GM12878 (cell line): ENCODE measurements at regions of chr14 and their contacts with region 1.

Region 1: GRCh38 chr14:102316743-102317563 is 2.6 kb upstream of the ZNF839 start:
- DNase-seq: peak; percentile 61
- ATAC-seq: peak; percentile 83
- H3K4me3 ChIP-seq: peak overlapping the region; percentile 75
- H3K27ac ChIP-seq: peak overlapping the region; percentile 61; the same call in 1 of the 2 replicates
- H3K4me1 ChIP-seq: peaks cover 27% of the 10 kb centered on the region
- H3K27me3 ChIP-seq: no peaks in the 10 kb centered on the region
- CTCF ChIP-seq: peak; percentile 84 to 93 (median 89)
- EP300 ChIP-seq: peak in 1 of 2 experiments; percentile 45; a peak in 1 of 4 replicates
- POLR2A ChIP-seq: no peak
- RAD21 ChIP-seq: no peak

Region 2: DNA sequence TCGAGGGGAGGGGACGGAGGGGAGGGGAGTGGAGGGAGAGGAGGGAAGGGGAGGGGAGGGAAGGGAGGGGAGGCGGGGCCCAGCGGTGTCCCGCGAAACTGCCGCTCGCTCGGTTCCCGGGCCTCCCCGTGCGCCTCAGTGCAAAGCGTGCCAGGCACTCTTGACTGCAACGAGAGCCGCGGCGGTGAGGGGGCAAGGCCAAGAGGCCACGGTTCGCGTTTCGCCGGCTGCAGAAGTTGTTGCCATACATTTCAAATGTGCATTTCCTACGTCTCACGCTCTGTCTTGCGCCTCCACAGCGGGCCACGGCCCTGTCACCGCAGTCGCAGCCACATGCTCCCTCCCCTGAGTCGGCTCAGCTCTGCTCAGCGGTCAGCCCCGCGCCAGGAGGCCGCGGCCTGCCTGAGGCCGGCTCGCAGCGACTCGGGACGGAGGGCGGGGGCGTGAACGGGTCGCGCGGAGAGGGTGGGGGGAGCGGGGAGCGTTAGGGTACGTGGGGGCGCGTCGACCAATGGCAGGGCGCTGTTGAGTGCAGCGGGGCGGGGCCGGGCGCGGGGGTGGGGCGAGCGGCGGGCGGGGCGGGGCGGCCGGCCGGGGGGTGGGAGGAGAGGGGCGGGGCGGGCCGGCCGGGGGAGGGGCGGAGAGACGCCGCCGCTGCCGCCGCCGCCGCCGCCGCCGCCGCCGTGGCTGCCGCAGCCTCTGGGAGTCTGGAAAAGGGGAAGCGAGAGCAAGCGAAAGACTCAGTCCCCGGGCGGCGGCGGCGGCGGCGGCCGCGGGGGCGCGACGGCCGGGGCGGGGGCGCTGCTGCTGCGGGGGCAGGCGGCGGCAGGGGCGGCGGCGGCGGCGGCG is 555.7 kb before region 1 on chr14 and contains the start of gene PPP2R5C:
- CTCF ChIA-PET with region 1: no interaction called
- POLR2A ChIA-PET with region 1: interaction called, 3 read pairs
- RAD21 ChIA-PET with region 1: no interaction called
- SMC1A ChIA-PET with region 1: no interaction called
- in situ Hi-C with region 1: loop called (anchors 25 kb)
- intact Hi-C with region 1: no loop called
- DNase-seq: no peak
- ATAC-seq: peak; percentile 93
- H3K4me3 ChIP-seq: peak within 1 kb of the TSS; percentile 84
- H3K27ac ChIP-seq: 0 out of 2 replicates have a peak within 1 kb of the TSS, but pooled peaks have one; percentile 37
- H3K4me1 ChIP-seq: no peaks in the 10 kb centered on the region
- H3K27me3 ChIP-seq: no peaks in the 10 kb centered on the region; a peak in 2 of 4 replicates
- CTCF ChIP-seq: no peak
- EP300 ChIP-seq: no peak
- POLR2A ChIP-seq: peak; percentile 67; the same call in 1 of the 2 replicates
- RAD21 ChIP-seq: no peak
- polyA plus RNA-seq, gene PPP2R5C: 190 to 199 TPM

Region 3: GRCh38 chr14:101964297-101965144 is 352.4 kb before region 1 on chr14 and contains the start of gene DYNC1H1:
- CTCF ChIA-PET with region 1: interaction called, 17 read pairs
- POLR2A ChIA-PET with region 1: no interaction called
- RAD21 ChIA-PET with region 1: interaction called, 5 read pairs
- SMC1A ChIA-PET with region 1: interaction called, 7 read pairs
- in situ Hi-C with region 1: loop called (anchors 5 kb)
- intact Hi-C with region 1: loop called (anchors 2 kb)
- DNase-seq: peak; percentile 27
- ATAC-seq: peak; percentile 87
- H3K4me3 ChIP-seq: peak within 1 kb of the TSS; percentile 79
- H3K27ac ChIP-seq: peak within 1 kb of the TSS; percentile 78
- H3K4me1 ChIP-seq: peaks cover 4% of the 10 kb centered on the region
- H3K27me3 ChIP-seq: no peaks in the 10 kb centered on the region
- CTCF ChIP-seq: no peak
- EP300 ChIP-seq: no peak
- POLR2A ChIP-seq: peak; percentile 97
- RAD21 ChIP-seq: no peak
- polyA plus RNA-seq, gene DYNC1H1: 38.4 to 54.0 TPM

Region 4: GRCh38 chr14:102096214-102097114 is 220.5 kb before region 1 on chr14:
- CTCF ChIA-PET with region 1: interaction called, 11 read pairs
- POLR2A ChIA-PET with region 1: interaction called, 3 read pairs
- RAD21 ChIA-PET with region 1: interaction called, 21 read pairs
- SMC1A ChIA-PET with region 1: interaction called, 13 read pairs
- in situ Hi-C with region 1: no loop called
- intact Hi-C with region 1: loop called (anchors 5 kb)
- DNase-seq: no peak
- ATAC-seq: peak; percentile 88
- H3K4me3 ChIP-seq: no peak overlapping the region
- H3K27ac ChIP-seq: no peak overlapping the region
- H3K4me1 ChIP-seq: no peaks in the 10 kb centered on the region; the same call in 1 of the 2 replicates
- H3K27me3 ChIP-seq: no peaks in the 10 kb centered on the region
- CTCF ChIP-seq: peak; percentile 78 to 92 (median 88)
- EP300 ChIP-seq: no peak
- POLR2A ChIP-seq: no peak
- RAD21 ChIP-seq: peak; percentile 90

Region 5: DNA sequence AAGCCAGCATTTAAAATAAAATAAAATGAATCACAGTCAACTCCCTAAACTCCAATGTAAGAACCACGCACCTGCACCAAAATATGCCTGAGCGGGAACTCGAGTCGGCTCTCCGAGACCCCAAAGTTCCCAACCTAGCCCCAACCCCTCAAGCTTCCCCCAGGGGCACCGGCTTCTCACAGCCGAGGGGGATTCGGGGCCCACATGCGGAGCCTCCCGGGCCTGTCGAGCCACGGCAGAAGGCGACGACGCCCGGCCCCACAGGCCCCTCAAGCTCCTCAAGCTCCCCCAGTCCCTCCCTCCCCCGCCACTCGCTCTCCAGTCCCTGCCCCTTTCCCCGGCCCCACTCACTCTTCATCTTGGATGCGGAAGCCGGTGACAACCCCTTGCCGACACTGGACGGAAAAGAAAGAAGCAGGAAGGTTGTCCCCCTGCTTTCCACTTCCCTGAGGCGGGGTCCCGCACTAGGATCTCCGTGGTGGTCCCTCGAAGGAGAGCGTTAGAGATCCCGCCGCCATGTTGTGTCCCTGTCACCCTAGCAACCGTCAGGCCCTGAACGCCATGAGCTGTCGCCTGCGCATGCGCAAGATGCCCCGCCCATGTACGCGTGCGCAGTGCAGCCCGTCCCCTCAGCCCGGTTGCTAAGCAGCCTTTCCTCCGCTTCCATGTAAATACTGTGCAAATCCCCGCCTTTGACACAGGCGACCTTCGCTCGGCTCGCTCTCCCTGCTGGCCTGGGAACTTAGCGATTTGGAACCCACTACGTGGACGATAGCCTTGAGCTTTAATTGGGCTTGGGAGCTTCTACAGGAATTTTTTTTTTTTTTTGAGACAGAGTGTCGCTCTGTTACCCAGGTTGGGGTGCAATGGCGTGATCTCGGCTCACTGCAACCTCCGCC is 12.1 kb before region 1 on chr14 and contains the start of gene MOK:
- CTCF ChIA-PET with region 1: interaction called, 19 read pairs
- POLR2A ChIA-PET with region 1: interaction called, 4 read pairs
- RAD21 ChIA-PET with region 1: interaction called, 8 read pairs
- SMC1A ChIA-PET with region 1: interaction called, 15 read pairs
- in situ Hi-C with region 1: no loop called
- intact Hi-C with region 1: no loop called
- DNase-seq: peak; percentile 92
- ATAC-seq: peak; percentile 99
- H3K4me3 ChIP-seq: peak within 1 kb of the TSS; percentile 78
- H3K27ac ChIP-seq: no peak within 1 kb of the TSS
- H3K4me1 ChIP-seq: no peaks in the 10 kb centered on the region; the same call in 1 of the 2 replicates
- H3K27me3 ChIP-seq: no peaks in the 10 kb centered on the region
- CTCF ChIP-seq: no peak
- EP300 ChIP-seq: no peak
- POLR2A ChIP-seq: no peak
- RAD21 ChIP-seq: no peak
- polyA plus RNA-seq, gene MOK: 0.10 to 0.46 TPM

Region 6: DNA sequence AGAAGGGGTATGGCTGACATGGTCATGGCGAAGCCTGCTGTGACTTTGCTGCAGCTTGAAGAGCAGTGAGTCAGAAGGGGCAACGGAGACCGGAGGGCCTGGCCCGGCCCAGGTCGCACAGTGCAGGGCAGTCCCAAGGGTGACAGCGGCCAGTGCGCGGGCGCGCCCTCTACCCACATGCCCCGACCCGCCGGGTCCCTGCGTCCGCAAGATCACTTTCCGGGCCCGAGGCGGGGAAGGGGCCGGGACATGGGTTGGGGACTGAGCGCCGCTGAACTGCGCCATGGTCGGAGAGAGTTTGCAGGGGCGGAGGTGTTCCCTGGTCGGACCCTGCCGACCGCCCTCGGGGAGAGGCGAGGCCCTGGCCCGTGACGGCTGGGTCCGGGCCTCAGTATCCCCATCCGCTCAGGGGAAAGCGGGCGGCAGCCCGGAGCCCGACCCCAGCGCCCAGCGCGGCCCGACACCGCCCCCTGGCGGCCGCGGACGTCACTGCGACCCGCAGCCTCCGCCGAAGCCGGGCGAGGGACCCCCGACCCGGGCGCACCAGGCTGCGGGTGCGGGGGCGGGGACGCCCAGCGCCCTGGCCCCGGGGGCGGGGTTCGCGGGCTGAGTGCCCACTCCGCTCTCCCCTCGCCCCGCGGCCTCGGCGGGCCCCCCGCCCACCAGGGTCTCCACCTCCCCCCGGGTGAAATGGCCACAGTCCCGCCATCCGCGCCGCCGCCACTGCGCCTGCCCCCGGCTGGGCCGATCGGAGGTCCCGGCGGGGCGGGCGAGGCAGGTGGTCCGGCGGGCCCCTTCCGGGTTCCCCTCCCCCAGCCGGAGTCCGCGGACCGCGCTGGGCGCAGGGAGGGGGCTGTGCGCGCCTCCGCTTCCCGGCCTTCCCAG is 199.8 kb after region 1 on chr14:
- CTCF ChIA-PET with region 1: interaction called, 10 read pairs
- POLR2A ChIA-PET with region 1: no interaction called
- RAD21 ChIA-PET with region 1: interaction called, 4 read pairs
- SMC1A ChIA-PET with region 1: interaction called, 5 read pairs
- in situ Hi-C with region 1: no loop called
- intact Hi-C with region 1: loop called (anchors 5 kb)
- DNase-seq: no peak
- ATAC-seq: peak; percentile 89
- H3K4me3 ChIP-seq: peak overlapping the region; percentile 46
- H3K27ac ChIP-seq: no peak overlapping the region
- H3K4me1 ChIP-seq: no peaks in the 10 kb centered on the region
- H3K27me3 ChIP-seq: peaks cover 0 to 2% of the 10 kb centered on the region in 2 experiments; a peak in 1 of 4 replicates
- CTCF ChIP-seq: peak; percentile 66 to 81 (median 71); a peak in 5 of 6 replicates
- EP300 ChIP-seq: no peak
- POLR2A ChIP-seq: no peak
- RAD21 ChIP-seq: peak; percentile 69